Vagina (tissue), 2 donors: ENCODE measurements at regions of chr3 and their contacts with region 1.

Region 1: GRCh38 chr3:127899766-127900165 is 15.3 kb upstream of the KBTBD12 start:
- DNase-seq: no peak
- H3K4me3 ChIP-seq: no peak overlapping the region
- H3K27ac ChIP-seq: no peak overlapping the region
- H3K4me1 ChIP-seq: no peaks in the 10 kb centered on the region
- H3K27me3 ChIP-seq: no peaks in the 10 kb centered on the region
- CTCF ChIP-seq: no peak
- POLR2A ChIP-seq: no peak

Region 2: GRCh38 chr3:127549820-127550460 is 349.8 kb before region 1 on chr3:
- intact Hi-C with region 1: loop called (anchors 5 kb)
- DNase-seq: no peak
- H3K4me3 ChIP-seq: no peak overlapping the region
- H3K27ac ChIP-seq: no peak overlapping the region
- H3K4me1 ChIP-seq: peaks cover 14% of the 10 kb centered on the region
- H3K27me3 ChIP-seq: no peaks in the 10 kb centered on the region
- CTCF ChIP-seq: no peak
- POLR2A ChIP-seq: no peak

Region 3: DNA sequence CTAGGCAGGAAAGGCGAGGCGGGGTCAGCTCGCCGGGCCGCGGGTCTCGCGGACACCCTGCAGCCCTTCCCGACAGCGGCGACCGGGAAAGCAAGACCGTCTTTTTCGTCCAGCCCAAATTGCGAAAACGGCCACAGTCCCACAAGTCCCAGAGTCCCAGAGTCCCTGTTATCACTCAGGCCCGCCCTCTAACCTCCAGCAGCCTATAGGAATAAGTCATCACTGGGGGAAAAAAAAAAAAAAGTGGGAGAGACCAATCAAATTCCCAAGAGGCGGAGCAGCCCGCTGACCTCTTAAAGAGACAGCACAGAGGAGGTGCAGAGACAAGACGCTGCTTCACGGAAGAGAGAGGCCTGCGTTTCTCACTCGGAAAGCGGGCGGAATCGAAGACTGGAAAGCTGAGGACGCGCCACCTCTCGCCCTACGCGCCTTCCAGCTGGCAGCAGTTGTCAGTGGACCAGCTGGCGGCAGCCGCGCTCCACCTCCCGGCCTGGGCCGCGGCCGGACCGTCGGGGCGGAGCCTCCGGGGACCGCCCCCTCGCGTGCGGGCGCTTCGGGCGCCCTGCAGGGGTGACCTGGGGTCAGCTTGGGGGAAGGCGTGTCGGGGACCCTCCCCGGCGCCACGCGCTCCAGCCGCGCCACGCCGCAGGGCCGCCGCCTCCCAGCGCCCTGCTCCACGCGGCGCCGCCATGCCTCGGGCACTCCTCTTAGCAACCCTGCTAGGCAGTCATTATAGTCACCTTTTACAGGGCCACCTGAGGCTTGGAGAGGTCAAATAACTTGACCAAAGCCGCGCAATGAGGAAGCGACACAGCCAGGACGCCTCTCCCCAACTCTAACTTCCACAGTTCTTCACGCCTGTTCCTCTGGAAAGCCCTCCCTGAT is 308.9 kb before region 1 on chr3 and contains the start of gene TPRA1:
- intact Hi-C with region 1: no loop called
- DNase-seq: peak in 1 of 2 donors; percentile 97
- H3K4me3 ChIP-seq: peak within 1 kb of the TSS; percentile 75 to 95
- H3K27ac ChIP-seq: peak within 1 kb of the TSS; percentile 95
- H3K4me1 ChIP-seq: peaks cover 47% of the 10 kb centered on the region
- H3K27me3 ChIP-seq: no peaks in the 10 kb centered on the region
- CTCF ChIP-seq: peak in 1 of 3 experiments; percentile 19
- POLR2A ChIP-seq: peak in 1 of 2 donors; percentile 40
- total RNA-seq, gene TPRA1: 54.0 TPM